ENCODE measurements at regions of chr13 and their contacts with region 1.

Region 1: DNA sequence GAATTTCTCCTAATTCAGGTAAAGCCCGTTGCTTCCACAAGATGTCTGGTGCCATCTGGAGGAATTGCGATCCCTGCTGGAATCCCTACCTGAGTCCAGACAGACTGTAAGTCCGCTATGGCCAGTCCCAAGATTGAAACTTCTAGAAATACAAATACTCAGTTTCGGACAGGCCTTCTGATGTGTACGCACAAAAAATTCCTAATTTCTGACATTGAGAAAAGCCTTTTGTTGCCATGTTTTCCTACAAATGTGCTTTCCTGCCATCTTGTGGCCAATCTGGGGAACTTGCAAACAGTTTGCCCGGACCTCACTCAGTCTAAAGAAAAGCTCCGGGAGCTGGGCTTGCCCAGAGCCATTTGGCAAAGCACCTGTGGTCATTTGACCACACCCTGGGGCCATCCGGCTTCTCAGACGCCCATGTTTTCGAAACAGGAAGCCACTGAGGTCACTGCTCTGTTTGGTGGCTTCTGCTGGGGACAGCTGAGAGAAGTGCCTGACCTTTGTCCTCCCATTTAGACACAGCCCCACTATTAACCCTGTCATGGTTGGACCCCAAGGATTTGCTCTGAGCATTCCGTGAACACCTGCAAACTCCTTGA is 79.4 kb downstream of the SLC15A1 start:
- DNase-seq: peak; percentile 85
- H3K4me3 ChIP-seq: no peak overlapping the region
- H3K27ac ChIP-seq: peak overlapping the region in 1 of 8 donors; percentile 7
- H3K4me1 ChIP-seq: peaks cover 5 to 17% (median 13%) of the 10 kb centered on the region in 6 donors
- H3K27me3 ChIP-seq: no peaks in the 10 kb centered on the region
- CTCF ChIP-seq: peak; percentile 62 to 89 (median 86)
- POLR2A ChIP-seq: no peak

Region 2: GRCh38 chr13:97855570-97856303 is 817.3 kb before region 1 on chr13:
- intact Hi-C with region 1: loop called (anchors 5 kb)
- DNase-seq: no peak
- H3K4me3 ChIP-seq: no peak overlapping the region
- H3K27ac ChIP-seq: peak overlapping the region in 2 of 8 donors; percentile 9 to 10
- H3K4me1 ChIP-seq: peaks cover 0 to 15% (median 6%) of the 10 kb centered on the region in 6 donors
- H3K27me3 ChIP-seq: peaks cover 0 to 6% (median 0%) of the 10 kb centered on the region in 7 donors
- CTCF ChIP-seq: peak; percentile 43 to 79 (median 67)
- POLR2A ChIP-seq: no peak

Region 3: GRCh38 chr13:97921176-97921816 is 751.7 kb before region 1 on chr13:
- intact Hi-C with region 1: no loop called
- DNase-seq: no peak
- H3K4me3 ChIP-seq: no peak overlapping the region
- H3K27ac ChIP-seq: no peak overlapping the region
- H3K4me1 ChIP-seq: peaks cover 0 to 4% (median 0%) of the 10 kb centered on the region in 6 donors
- H3K27me3 ChIP-seq: no peaks in the 10 kb centered on the region
- CTCF ChIP-seq: no peak
- POLR2A ChIP-seq: no peak

Region 4: DNA sequence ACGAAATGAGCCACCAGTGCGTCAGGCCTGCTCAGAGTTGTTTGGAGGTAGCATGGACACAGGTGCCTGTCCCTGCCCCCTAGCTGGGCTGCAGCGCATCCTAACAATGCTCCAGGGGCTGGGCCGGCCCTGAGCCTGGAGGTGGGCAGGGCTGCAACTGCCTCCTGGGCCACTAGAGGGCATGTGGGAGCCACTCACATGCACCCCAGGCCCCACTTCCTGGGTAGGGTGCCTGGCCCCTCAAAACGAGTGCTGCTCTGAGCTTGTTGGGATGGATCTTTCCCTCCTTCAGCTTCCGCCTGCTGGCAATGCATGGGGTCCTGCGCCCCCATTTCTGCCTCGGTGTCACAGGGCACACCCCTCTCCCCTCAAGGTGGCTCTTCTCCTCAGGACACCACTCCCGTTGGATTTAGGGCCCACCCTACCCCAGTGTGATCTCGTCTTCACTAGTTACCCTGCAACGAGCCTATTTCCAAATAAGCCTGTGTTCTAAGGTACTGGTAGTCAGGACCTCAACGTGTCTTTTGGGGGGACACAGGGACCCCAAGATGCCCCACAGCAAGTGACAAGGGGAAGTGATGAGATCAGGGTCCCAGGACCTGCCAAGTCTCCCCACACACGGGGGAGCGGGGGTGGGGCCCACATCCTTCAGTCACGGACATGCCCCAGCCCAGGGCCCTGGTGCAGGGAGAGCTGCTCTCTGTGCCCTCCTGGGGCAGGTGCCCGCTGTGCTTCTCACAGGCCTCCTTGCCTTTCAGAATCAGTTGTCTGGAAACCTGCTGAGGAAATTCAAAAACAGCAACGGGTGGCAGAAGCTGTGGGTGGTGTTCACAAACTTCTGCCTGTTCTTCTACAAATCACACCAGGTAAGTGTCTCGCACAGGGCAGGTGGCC is 227.5 kb before region 1 on chr13:
- intact Hi-C with region 1: loop called (anchors 5 kb)
- DNase-seq: peak; percentile 93
- H3K4me3 ChIP-seq: no peak overlapping the region
- H3K27ac ChIP-seq: peak overlapping the region in 7 of 8 donors; percentile 36 to 69 (median 60)
- H3K4me1 ChIP-seq: peaks cover 0 to 37% (median 14%) of the 10 kb centered on the region in 6 donors
- H3K27me3 ChIP-seq: no peaks in the 10 kb centered on the region
- CTCF ChIP-seq: peak; percentile 93 to 99 (median 98)
- POLR2A ChIP-seq: no peak

Region 5: DNA sequence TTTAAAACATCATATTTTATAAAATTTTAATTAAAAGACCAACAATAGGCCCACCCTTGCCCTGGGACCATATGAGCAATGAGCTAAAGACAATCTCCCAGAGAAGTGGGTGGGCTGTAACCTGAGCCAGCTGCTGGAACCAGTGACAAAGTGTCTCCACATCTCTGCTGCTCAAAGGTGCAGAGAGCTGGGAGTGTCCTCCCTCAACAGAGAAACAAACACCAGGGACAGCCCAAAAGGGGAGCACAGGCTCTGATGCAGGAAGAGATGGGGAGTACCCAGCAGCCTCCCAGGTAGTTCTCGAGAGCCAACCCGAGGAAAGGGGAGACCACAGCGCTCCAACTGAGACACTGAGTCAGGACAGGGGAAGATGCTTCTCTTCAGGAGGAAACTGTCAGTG is 265.8 kb after region 1 on chr13:
- intact Hi-C with region 1: no loop called
- DNase-seq: peak; percentile 59
- H3K4me3 ChIP-seq: no peak overlapping the region
- H3K27ac ChIP-seq: no peak overlapping the region
- H3K4me1 ChIP-seq: no peaks in the 10 kb centered on the region
- H3K27me3 ChIP-seq: no peaks in the 10 kb centered on the region
- CTCF ChIP-seq: no peak
- POLR2A ChIP-seq: no peak